Activated CD4-positive, alpha-beta T cell treated with anti-CD3 and anti-CD28 coated beads, Interleukin-2, amount 10 ng/mL, durations not matched to agents 7 days and 5 days (primary cell): ENCODE measurements at regions of chr1 and their contacts with region 1.

Region 1: GRCh38 chr1:206503591-206504362 is 3.6 kb upstream of the RASSF5 start:
- DNase-seq: peak; percentile 17
- H3K4me3 Mint-ChIP-seq: no peak overlapping the region
- H3K27ac Mint-ChIP-seq: no peak overlapping the region
- H3K4me1 Mint-ChIP-seq: peaks cover 48% of the 10 kb centered on the region
- H3K27me3 Mint-ChIP-seq: peaks cover 19% of the 10 kb centered on the region

Region 2: DNA sequence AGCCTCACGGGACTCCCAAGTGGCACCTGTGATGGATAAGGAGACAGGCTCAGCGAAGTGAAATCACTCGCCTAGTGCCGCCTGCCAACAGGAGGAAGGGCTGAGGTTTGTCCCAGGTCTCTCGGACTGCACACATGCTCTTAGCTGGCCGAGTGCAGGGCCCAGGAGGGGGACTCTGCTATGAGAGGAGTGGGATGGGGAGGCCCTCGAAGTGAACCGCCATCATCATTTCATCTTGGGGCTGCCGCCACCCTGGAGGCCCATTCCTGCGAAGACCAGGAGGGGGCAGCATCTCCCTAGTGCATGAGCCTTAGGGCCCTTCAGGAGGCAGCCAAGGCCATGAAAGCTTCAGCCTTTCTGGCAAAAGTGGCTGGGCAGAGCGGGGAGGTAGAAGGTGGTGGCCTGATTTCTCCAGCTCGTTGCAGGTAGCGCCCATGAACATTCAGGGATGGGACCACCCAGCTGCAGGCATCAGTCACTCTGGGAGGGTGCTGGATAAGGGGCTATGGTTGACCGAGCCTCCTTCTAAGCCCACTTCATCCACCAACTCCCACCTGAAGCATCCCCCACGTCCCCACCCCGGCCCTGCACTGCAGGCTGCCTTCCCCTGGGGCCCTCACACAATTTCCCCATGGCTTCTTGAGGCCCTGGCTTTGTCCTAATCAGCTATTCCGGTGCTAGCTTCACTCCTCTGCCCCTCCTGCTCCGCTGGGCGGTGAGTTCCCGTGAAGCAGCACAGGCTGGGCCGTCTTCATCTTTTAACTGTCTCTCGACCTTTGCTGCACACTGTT is 13.6 kb before region 1 on chr1:
- CTCF ChIA-PET with region 1: interaction called, 13 read pairs
- POLR2A ChIA-PET with region 1: no interaction called
- DNase-seq: peak; percentile 74
- H3K4me3 Mint-ChIP-seq: no peak overlapping the region
- H3K27ac Mint-ChIP-seq: no peak overlapping the region
- H3K4me1 Mint-ChIP-seq: peaks cover 17% of the 10 kb centered on the region
- H3K27me3 Mint-ChIP-seq: no peaks in the 10 kb centered on the region

Region 3: GRCh38 chr1:206532368-206532767 is 28.6 kb after region 1 on chr1:
- CTCF ChIA-PET with region 1: no interaction called
- POLR2A ChIA-PET with region 1: no interaction called
- DNase-seq: no peak
- H3K4me3 Mint-ChIP-seq: no peak overlapping the region
- H3K27ac Mint-ChIP-seq: no peak overlapping the region
- H3K4me1 Mint-ChIP-seq: no peaks in the 10 kb centered on the region
- H3K27me3 Mint-ChIP-seq: peaks cover 3% of the 10 kb centered on the region